ENCODE measurements at regions of chrX and their contacts with region 1.

Region 1: GRCh38 chrX:49100704-49101628 is 21.3 kb upstream of the WDR45 start:
- DNase-seq: peak; percentile 83 to 93 (median 90)
- H3K4me3 ChIP-seq: peak overlapping the region; percentile 41 to 80 (median 66)
- H3K27ac ChIP-seq: peak overlapping the region in 49 of 59 donors; percentile 22 to 87 (median 66)
- H3K27me3 ChIP-seq: peaks cover 0 to 30% (median 0%) of the 10 kb centered on the region in 45 donors
- CTCF ChIP-seq: peak in 5 of 56 donors; percentile 5 to 21 (median 10)

Region 2: DNA sequence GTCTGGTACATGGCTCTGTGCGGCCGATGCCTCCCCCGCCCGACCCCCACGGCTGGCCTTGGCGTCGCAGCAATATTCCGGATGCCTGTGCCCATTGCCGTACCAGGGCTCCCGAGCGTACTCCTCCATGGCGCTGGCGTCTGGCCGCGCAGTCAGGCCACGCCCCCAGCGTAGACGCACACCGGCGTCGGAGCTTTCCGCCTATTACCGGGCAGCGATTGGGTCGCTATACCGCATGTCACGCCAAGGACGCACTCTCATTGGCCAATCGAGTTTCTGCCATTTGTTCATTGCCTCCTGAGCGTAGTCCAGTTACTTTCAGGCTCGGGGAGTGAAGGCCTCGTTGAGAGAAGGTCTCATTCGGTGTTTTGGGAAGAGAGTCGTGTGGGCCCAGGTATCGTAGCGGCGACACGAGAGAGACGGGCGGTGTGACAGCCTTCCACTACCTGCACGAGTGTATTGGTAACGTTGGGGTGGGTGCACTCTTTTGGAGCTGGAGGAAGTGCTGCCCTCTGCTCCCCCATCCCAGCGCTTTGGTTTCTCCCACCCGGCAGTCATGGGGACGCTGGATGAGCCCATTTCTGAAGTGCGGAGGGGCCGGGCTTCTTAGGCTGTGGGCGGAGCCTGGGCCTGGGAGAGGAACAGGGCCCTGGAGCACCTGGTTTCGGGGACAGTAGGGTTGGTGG is 203.2 kb before region 1 on chrX and contains the starts of genes PQBP1 and TIMM17B:
- intact Hi-C with region 1: no loop called
- DNase-seq: peak; percentile 79 to 95 (median 92)
- H3K4me3 ChIP-seq: peak within 1 kb of the TSS; percentile 46 to 83 (median 72)
- H3K27ac ChIP-seq: peak within 1 kb of the TSS in 58 of 59 donors; percentile 36 to 97 (median 88)
- H3K27me3 ChIP-seq: peaks cover 0 to 50% (median 5%) of the 10 kb centered on the region in 45 donors
- CTCF ChIP-seq: peak in 2 of 56 donors; percentile 12 to 13
- total RNA-seq, gene PQBP1: 42.9 to 91.7 (median 67.1) TPM
- total RNA-seq, gene TIMM17B: 22.3 to 50.4 (median 35.3) TPM

Region 3: DNA sequence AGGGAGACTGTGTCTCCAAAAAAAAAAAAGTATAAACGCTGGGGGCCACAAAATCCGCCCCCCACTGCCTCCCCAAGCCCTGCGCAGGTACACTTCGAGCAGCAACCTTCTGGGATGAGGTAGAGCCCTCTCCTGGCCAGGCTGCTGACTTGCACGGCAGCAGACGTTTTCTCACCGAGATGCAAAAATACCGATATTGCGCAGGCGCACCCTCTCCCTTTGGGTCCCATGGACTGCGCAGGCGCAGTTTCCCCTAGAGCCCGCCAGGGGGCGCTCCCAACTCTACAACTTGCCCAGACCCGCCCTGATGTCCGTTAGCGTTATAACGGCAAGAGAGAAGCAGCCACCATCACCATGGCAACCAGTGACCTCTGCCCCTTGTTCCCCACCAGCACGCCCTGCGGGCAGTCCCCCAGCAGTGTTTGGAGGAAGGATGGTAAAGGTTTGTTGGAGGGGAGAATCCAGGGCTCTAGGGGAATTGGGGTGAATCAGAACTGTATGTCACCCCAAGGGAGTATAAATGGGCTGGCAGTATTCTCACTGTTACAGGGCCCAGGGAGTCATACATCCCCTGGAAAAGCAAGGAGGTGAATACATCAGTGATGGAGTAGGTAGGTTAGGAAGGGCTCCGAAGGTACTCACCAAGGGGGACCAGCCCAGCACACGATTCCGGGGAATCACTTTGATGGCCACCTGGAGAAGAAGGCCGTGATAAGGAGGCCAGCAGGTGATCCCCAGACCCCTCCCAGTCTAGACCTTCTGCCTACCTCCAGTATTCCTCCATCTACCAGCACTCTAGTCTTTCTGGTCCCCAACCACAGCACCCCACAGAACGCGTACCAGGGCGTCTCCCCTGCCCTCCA is 183.6 kb before region 1 on chrX:
- intact Hi-C with region 1: loop called in 1 of 2 experiments (anchors 10 kb)
- DNase-seq: peak; percentile 67 to 87 (median 82)
- H3K4me3 ChIP-seq: peak overlapping the region in 58 of 59 donors; percentile 9 to 77 (median 63)
- H3K27ac ChIP-seq: peak overlapping the region in 42 of 59 donors; percentile 8 to 87 (median 51)
- H3K27me3 ChIP-seq: peaks cover 0 to 54% (median 3%) of the 10 kb centered on the region in 45 donors
- CTCF ChIP-seq: peak; percentile 53 to 96 (median 91)

Region 4: DNA sequence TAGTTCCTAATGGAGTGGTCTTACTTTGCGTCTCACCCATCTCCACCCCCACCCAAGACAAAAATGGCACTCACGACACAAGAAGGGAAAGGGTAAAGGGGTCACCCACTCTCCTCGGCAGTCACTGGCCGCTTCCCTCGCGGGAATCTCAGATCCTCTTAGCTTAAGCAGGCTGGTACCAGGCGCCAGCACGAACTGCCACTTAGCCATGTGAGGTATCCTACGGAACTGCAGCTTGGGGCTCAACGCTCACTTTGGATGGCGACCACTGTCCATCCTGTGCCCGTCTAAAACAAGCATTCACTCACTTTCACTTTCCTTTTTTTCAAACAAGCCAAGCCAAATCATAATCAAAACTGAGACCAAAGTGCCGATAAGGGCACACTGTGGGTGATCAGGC is 47.0 kb after region 1 on chrX:
- intact Hi-C with region 1: no loop called
- DNase-seq: no peak
- H3K4me3 ChIP-seq: no peak overlapping the region
- H3K27ac ChIP-seq: no peak overlapping the region
- H3K27me3 ChIP-seq: peaks cover 0 to 52% (median 2%) of the 10 kb centered on the region in 45 donors
- CTCF ChIP-seq: no peak

Measured in dorsolateral prefrontal cortex (tissue), 120 donors.